Astrocyte of the cerebellum (primary cell): ENCODE measurements at regions of chr2 and their contacts with region 1.

Region 1: DNA sequence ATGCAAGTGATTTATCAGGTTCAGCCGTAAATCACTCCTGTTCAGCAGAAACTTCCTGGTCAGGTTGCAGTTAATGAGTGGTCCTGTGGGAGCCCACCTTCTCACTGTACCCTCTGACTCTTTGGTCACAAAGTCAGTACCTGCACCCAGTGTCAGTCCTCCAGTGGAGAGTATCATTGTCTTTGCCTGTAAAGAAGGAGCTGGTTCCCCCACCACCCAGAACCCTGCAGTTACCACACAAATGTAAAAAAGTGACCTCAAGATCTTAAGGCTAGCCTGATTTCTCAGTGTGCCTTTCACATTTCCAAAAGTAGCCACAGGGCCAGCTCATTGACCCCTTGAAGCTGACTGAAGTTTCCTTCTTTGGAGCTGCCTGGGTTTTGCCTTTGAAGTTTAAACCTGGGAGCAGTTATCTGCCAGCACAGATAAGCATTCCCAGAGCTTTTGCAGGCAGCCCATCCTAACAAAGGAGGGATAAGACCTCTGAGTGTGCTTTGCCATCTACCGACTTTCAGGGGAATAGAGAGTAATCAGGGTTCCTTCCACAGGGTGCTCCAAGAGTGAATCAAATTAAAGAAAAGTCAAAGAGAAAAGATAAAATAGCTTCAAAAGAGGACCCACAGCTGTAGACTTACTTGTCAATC is 725.2 kb downstream of the CPS1 start:
- DNase-seq: no peak
- H3K4me3 ChIP-seq: no peak overlapping the region
- CTCF ChIP-seq: no peak

Region 2: GRCh38 chr2:211237586-211238275 is 43.8 kb before region 1 on chr2:
- in situ Hi-C with region 1: loop called (anchors 10 kb)
- DNase-seq: no peak
- H3K4me3 ChIP-seq: no peak overlapping the region
- CTCF ChIP-seq: no peak